Activated CD4-positive, alpha-beta T cell treated with anti-CD3 and anti-CD28 coated beads for 36 hours (primary cell): ENCODE measurements at regions of chr17 and their contacts with region 1.

Region 1: DNA sequence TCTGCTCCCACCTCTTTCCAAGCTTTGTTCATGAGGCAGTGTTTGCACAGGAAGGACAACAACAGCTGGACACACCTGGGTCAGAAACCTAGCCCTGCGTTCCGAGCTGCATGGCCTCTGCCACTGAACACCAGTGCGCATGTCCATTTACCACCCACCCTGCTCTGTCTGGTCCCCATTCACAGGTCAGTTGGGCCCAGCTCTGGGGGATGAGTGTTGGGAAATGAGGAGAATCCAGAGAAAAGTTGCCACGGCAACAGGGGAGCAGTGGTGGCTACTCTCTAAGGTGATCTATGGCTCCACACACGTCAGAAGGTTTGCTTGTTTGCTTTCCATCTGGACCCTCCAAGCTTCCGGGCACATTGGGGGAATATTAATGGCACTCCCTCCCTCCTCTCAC is 70.4 kb upstream of the ASIC2 start:
- DNase-seq: no peak
- ATAC-seq: no peak
- H3K4me3 Mint-ChIP-seq: no peak overlapping the region
- H3K27ac Mint-ChIP-seq: no peak overlapping the region
- H3K4me1 Mint-ChIP-seq: no peaks in the 10 kb centered on the region
- H3K27me3 Mint-ChIP-seq: peaks cover 14% of the 10 kb centered on the region

Region 2: GRCh38 chr17:32396343-32396742 is 967.1 kb before region 1 on chr17:
- CTCF ChIA-PET with region 1: no interaction called
- POLR2A ChIA-PET with region 1: no interaction called
- intact Hi-C with region 1: no loop called
- DNase-seq: no peak
- ATAC-seq: no peak
- H3K4me3 Mint-ChIP-seq: no peak overlapping the region
- H3K27ac Mint-ChIP-seq: no peak overlapping the region
- H3K4me1 Mint-ChIP-seq: no peaks in the 10 kb centered on the region
- H3K27me3 Mint-ChIP-seq: no peaks in the 10 kb centered on the region

Region 3: GRCh38 chr17:33416131-33416530 is 52.7 kb after region 1 on chr17:
- CTCF ChIA-PET with region 1: no interaction called
- POLR2A ChIA-PET with region 1: no interaction called
- intact Hi-C with region 1: loop called in 1 of 2 experiments (anchors 5 kb)
- DNase-seq: no peak
- ATAC-seq: no peak
- H3K4me3 Mint-ChIP-seq: no peak overlapping the region
- H3K27ac Mint-ChIP-seq: no peak overlapping the region
- H3K4me1 Mint-ChIP-seq: no peaks in the 10 kb centered on the region
- H3K27me3 Mint-ChIP-seq: peaks cover 5% of the 10 kb centered on the region

Region 4: GRCh38 chr17:33436321-33436720 is 72.8 kb after region 1 on chr17:
- CTCF ChIA-PET with region 1: no interaction called
- POLR2A ChIA-PET with region 1: no interaction called
- intact Hi-C with region 1: no loop called
- DNase-seq: no peak
- ATAC-seq: no peak
- H3K4me3 Mint-ChIP-seq: no peak overlapping the region
- H3K27ac Mint-ChIP-seq: no peak overlapping the region
- H3K4me1 Mint-ChIP-seq: no peaks in the 10 kb centered on the region
- H3K27me3 Mint-ChIP-seq: peaks cover 2% of the 10 kb centered on the region